Activated naive CD8-positive, alpha-beta T cell treated with anti-CD3 and anti-CD28 coated beads, Interleukin-2, amount 10 ng/mL, durations not matched to agents 7 days and 5 days (primary cell): ENCODE measurements at regions of chr4 and their contacts with region 1.

Region 1: GRCh38 chr4:185425647-185426352 is at the start of gene UFSP2:
- DNase-seq: peak; percentile 93
- ATAC-seq: peak; percentile 91
- H3K4me3 Mint-ChIP-seq: peak within 1 kb of the TSS; percentile 86
- H3K27ac Mint-ChIP-seq: peak within 1 kb of the TSS; percentile 86
- H3K4me1 Mint-ChIP-seq: peaks cover 18% of the 10 kb centered on the region
- H3K27me3 Mint-ChIP-seq: peaks cover 7% of the 10 kb centered on the region
- total RNA-seq, gene UFSP2: 19.8 to 24.1 TPM

Region 2: GRCh38 chr4:185395956-185396723 is 29.7 kb before region 1 on chr4:
- POLR2A ChIA-PET with region 1: interaction called, 27 read pairs
- DNase-seq: peak; percentile 98
- ATAC-seq: peak; percentile 87
- H3K4me3 Mint-ChIP-seq: peak overlapping the region; percentile 93
- H3K27ac Mint-ChIP-seq: peak overlapping the region; percentile 99
- H3K4me1 Mint-ChIP-seq: peaks cover 34% of the 10 kb centered on the region
- H3K27me3 Mint-ChIP-seq: no peaks in the 10 kb centered on the region